ENCODE measurements at regions of chr1 and their contacts with region 1.

Region 1: GRCh38 chr1:223081181-223081994 is 61.7 kb downstream of the TLR5 start:
- DNase-seq: peak; percentile 96
- ATAC-seq: peak; percentile 98
- H3K4me3 ChIP-seq: peak overlapping the region; percentile 37 to 46
- H3K27ac ChIP-seq: 0 out of 2 replicates have a peak overlapping the region, but pooled peaks have one; percentile 34
- H3K4me1 ChIP-seq: no peaks in the 10 kb centered on the region
- H3K27me3 ChIP-seq: 0 out of 2 replicates have a peak, but pooled peaks cover 2% of the 10 kb centered on the region
- CTCF ChIP-seq: peak; percentile 99

Region 2: GRCh38 chr1:222732216-222733159 is 348.9 kb before region 1 on chr1:
- CTCF ChIA-PET with region 1: no interaction called
- POLR2A ChIA-PET with region 1: no interaction called
- in situ Hi-C with region 1: loop called (anchors 25 kb)
- intact Hi-C with region 1: loop called (anchors 5 kb)
- DNase-seq: no peak
- ATAC-seq: no peak
- H3K4me3 ChIP-seq: no peak overlapping the region
- H3K27ac ChIP-seq: no peak overlapping the region
- H3K4me1 ChIP-seq: no peaks in the 10 kb centered on the region; the same call in 1 of the 2 replicates
- H3K27me3 ChIP-seq: no peaks in the 10 kb centered on the region
- CTCF ChIP-seq: no peak

Region 3: DNA sequence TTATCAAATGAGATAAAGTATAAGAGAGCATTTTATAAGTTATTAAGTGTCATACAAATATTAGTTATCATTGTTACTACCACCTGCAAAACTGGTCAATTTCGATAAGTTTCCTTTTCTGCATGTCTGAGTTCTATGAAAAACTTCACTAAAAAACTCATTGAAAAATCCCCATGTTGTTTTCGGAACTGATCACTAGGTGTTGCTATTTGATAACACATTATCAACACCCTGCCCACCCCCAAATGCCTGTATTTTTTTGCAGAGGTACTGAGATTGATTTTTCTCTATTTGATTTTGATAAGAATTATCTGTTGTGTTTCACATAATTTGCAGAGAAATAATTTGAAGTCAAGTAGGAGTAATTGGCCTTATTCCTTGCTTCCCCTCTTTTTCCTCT is 288.6 kb before region 1 on chr1:
- CTCF ChIA-PET with region 1: no interaction called
- POLR2A ChIA-PET with region 1: interaction called, 3 read pairs
- in situ Hi-C with region 1: no loop called
- intact Hi-C with region 1: loop called (anchors 1 kb)
- DNase-seq: no peak
- ATAC-seq: no peak
- H3K4me3 ChIP-seq: no peak overlapping the region
- H3K27ac ChIP-seq: no peak overlapping the region
- H3K4me1 ChIP-seq: no peaks in the 10 kb centered on the region
- H3K27me3 ChIP-seq: peaks cover 6% of the 10 kb centered on the region; the same call in 1 of the 2 replicates
- CTCF ChIP-seq: peak; percentile 64; the same call in 1 of the 2 replicates

Region 4: DNA sequence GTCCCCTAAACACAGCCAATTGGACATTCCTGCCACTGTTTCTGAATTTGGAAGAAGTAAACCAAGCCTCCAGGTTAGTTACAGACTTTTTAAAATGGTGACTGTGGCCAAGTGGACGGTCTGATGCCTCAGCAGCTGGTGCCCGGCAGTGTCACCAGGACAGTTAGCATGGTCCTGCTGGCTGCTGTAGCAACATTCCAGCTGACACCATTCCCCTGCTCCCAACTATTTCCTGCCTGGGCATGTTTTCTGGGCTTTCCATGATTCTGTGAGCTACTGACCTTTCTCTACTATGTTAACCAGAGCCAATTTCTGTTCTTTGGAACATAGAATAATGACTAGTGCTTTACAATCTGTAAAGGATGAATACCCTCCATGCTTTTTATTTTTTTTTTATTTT is 33.4 kb before region 1 on chr1:
- CTCF ChIA-PET with region 1: no interaction called
- POLR2A ChIA-PET with region 1: no interaction called
- in situ Hi-C with region 1: no loop called
- intact Hi-C with region 1: no loop called
- DNase-seq: no peak
- ATAC-seq: no peak
- H3K4me3 ChIP-seq: no peak overlapping the region
- H3K27ac ChIP-seq: no peak overlapping the region
- H3K4me1 ChIP-seq: no peaks in the 10 kb centered on the region
- H3K27me3 ChIP-seq: no peaks in the 10 kb centered on the region
- CTCF ChIP-seq: no peak